ENCODE measurements at regions of chr17 and their contacts with region 1.

Region 1: GRCh38 chr17:42997984-42998938 is at the start of gene RPL27:
- DNase-seq: peak; percentile 97 to 99 (median 98)
- ATAC-seq: peak; percentile 97 to 99 (median 98)
- H3K4me3 ChIP-seq: peak within 1 kb of the TSS; percentile 50 to 94 (median 77)
- H3K27ac ChIP-seq: peak within 1 kb of the TSS; percentile 26 to 97 (median 87)
- H3K4me1 ChIP-seq: peaks cover 7 to 40% (median 16%) of the 10 kb centered on the region in 12 donors
- H3K27me3 ChIP-seq: no peaks in the 10 kb centered on the region
- CTCF ChIP-seq: peak; percentile 79 to 98 (median 89)
- POLR2A ChIP-seq: peak in 1 of 2 donors; percentile 89
- total RNA-seq, gene RPL27: 477 to 796 (median 664) TPM

Region 2: DNA sequence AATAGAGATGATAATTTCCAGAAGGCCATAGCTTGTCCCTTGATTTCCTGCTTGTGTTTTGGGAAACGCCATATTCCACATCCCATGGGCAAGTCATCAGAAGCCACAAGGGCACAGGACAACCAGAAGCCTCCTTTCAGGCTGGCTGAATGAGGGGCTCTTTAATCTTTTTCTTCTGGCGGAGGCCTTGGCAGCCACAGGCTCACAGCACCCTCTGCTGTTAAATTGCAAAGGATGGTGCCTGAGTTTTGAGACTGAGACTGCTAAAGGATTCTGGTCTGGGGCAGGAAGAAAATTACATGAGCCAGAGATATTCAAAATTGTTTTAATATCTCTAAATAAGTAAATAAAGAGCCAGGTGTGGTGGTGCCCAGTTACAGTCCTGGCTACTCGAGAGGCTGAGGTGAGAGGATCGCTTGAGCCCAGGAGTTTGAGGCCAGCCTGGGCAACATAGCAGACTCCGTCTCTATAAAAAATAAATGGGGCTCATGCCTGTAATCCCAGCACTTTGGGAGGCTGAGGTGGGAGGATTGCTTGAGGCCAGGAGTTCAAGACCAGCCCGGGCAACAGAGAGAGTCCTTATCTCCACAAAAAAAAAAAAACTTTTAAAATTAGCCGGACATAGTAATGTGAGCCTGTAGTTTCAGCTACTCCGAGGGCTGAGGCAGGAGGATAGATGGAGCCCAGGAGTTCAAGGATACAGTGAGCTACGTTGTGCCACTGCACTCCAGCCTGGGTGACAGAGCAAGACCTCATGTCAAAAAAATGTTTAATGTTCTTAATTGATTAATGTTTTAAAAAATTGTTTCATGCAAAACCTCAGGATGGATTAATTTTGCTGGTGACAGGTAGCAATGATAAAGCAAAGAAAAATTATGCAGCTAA is 60.3 kb before region 1 on chr17:
- intact Hi-C with region 1: loop called in 1 of 10 experiments (anchors 10 kb)
- DNase-seq: peak in 4 of 5 donors; percentile 33 to 38 (median 36)
- ATAC-seq: peak; percentile 58 to 83 (median 74)
- H3K4me3 ChIP-seq: no peak overlapping the region
- H3K27ac ChIP-seq: no peak overlapping the region
- H3K4me1 ChIP-seq: no peaks in the 10 kb centered on the region
- H3K27me3 ChIP-seq: peaks cover 0 to 4% (median 0%) of the 10 kb centered on the region in 9 donors
- CTCF ChIP-seq: peak; percentile 52 to 80 (median 66)
- POLR2A ChIP-seq: no peak

Region 3: DNA sequence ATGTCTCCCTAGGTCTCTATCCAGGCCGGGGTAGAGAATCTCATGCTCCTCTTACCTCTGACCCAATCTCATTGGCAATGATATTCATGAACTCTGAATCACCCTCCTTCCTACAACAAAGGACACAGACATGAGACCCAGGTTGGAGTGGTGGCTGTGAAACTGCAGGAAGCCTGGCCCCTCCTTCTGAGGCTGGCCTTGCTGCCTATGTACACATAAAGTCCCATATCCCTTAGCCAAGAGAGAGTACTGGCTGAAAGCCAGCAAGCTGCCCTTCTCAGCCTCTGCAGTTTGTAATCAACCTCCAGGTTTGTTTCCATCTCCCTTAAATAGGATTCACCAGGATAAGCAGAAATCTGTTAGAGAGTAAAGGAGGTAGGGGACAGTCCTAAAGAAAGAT is 44.6 kb before region 1 on chr17:
- intact Hi-C with region 1: no loop called
- DNase-seq: no peak
- ATAC-seq: peak in 1 of 4 donors; percentile 66
- H3K4me3 ChIP-seq: no peak overlapping the region
- H3K27ac ChIP-seq: no peak overlapping the region
- H3K4me1 ChIP-seq: no peaks in the 10 kb centered on the region
- H3K27me3 ChIP-seq: no peaks in the 10 kb centered on the region
- CTCF ChIP-seq: no peak
- POLR2A ChIP-seq: no peak

Region 4: GRCh38 chr17:42964161-42964932 is 33.9 kb before region 1 on chr17 and contains the start of gene AARSD1:
- intact Hi-C with region 1: loop called in 1 of 10 experiments (anchors 1 kb)
- DNase-seq: peak; percentile 91 to 94 (median 93)
- ATAC-seq: peak; percentile 96 to 99 (median 97)
- H3K4me3 ChIP-seq: peak within 1 kb of the TSS; percentile 40 to 96 (median 77)
- H3K27ac ChIP-seq: peak within 1 kb of the TSS in 11 of 12 donors; percentile 72 to 92 (median 87)
- H3K4me1 ChIP-seq: peaks cover 0 to 14% (median 6%) of the 10 kb centered on the region in 12 donors
- H3K27me3 ChIP-seq: no peaks in the 10 kb centered on the region
- CTCF ChIP-seq: peak in 1 of 12 donors; percentile 13
- POLR2A ChIP-seq: peak in 1 of 2 donors; percentile 70
- total RNA-seq, gene AARSD1: 19.5 to 33.3 (median 26.2) TPM

Region 5: GRCh38 chr17:42980398-42981397 is 17.6 kb before region 1 on chr17 and contains the start of gene RUNDC1:
- intact Hi-C with region 1: loop called in 2 of 10 experiments (anchors 1 kb)
- DNase-seq: peak; percentile 94 to 97 (median 95)
- ATAC-seq: peak; percentile 92 to 95 (median 92)
- H3K4me3 ChIP-seq: peak within 1 kb of the TSS; percentile 63 to 100 (median 92)
- H3K27ac ChIP-seq: peak within 1 kb of the TSS; percentile 11 to 93 (median 89)
- H3K4me1 ChIP-seq: peaks cover 0 to 40% (median 25%) of the 10 kb centered on the region in 12 donors
- H3K27me3 ChIP-seq: no peaks in the 10 kb centered on the region
- CTCF ChIP-seq: no peak
- POLR2A ChIP-seq: peak in 1 of 2 donors; percentile 40
- total RNA-seq, gene RUNDC1: 9.8 to 15.9 (median 11.4) TPM

Region 6: GRCh38 chr17:43042025-43042628 is 43.9 kb after region 1 on chr17:
- intact Hi-C with region 1: no loop called
- DNase-seq: no peak
- ATAC-seq: no peak
- H3K4me3 ChIP-seq: no peak overlapping the region
- H3K27ac ChIP-seq: no peak overlapping the region
- H3K4me1 ChIP-seq: no peaks in the 10 kb centered on the region
- H3K27me3 ChIP-seq: no peaks in the 10 kb centered on the region
- CTCF ChIP-seq: no peak
- POLR2A ChIP-seq: no peak

Region 7: DNA sequence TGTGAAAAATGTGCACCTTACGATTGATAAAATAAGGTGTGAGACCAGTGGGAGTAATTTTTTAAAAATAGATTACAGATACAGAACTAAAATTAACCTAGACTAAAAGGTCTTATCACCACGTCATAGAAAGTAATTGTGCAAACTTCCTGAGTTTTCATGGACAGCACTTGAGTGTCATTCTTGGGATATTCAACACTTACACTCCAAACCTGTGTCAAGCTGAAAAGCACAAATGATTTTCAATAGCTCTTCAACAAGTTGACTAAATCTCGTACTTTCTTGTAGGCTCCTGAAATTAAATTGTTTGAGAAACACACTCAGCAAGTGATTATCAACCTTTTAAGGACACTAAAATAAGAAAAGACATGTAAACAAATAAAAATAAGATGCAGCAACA is 106.4 kb after region 1 on chr17:
- intact Hi-C with region 1: no loop called
- DNase-seq: no peak
- ATAC-seq: no peak
- H3K4me3 ChIP-seq: no peak overlapping the region
- H3K27ac ChIP-seq: no peak overlapping the region
- H3K4me1 ChIP-seq: peaks cover 0 to 5% (median 0%) of the 10 kb centered on the region in 12 donors
- H3K27me3 ChIP-seq: no peaks in the 10 kb centered on the region
- CTCF ChIP-seq: no peak
- POLR2A ChIP-seq: no peak

Measured in heart left ventricle (tissue), 16 donors.